Activated naive CD4-positive, alpha-beta T cell treated with anti-CD3 and anti-CD28 coated beads for 36 hours (primary cell): ENCODE measurements at regions of chr19 and their contacts with region 1.

Region 1: DNA sequence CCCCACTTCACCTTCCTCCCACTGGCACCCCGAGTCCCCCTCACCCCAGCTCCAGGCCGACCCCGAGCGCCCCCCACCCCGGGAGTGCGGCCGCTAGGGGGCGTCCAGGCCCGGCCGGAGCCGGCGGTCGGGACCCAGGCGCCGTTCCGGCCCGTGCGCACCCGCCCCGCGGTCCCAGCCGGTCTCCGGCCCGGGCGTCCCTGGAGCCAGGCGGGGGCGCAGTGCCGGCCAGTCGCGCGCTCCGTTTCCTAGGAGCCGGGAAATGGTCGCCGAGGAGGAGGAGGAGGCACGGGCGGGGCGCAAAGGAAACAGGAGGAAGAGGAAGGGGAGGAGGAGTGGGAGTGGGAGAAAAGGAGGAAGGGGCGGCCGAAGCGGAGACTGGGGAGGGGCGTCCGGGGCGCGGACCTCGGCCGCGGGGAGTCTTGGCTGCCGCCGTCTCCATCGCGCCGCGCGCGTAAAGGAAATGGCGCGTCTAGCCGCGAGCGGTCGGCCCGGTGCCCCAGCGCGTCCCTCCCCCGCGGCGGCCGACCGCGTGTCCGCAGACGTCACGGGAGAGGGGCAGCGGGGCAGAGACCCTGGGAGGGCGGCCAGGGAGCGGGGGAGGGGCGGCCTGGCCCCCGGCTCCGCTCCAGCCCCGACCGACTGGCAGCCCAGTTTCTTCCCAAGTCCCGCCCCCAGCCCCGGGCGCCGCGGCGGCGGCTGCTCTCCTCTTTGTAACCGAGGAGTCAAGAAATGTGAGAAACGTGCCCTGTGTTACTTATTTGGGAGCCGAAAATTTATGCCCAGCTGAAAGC is 1.1 kb upstream of the KCTD15 start:
- DNase-seq: peak; percentile 53
- H3K4me3 Mint-ChIP-seq: peak overlapping the region; percentile 72
- H3K27ac Mint-ChIP-seq: no peak overlapping the region
- H3K4me1 Mint-ChIP-seq: no peaks in the 10 kb centered on the region
- H3K27me3 Mint-ChIP-seq: peaks cover 40% of the 10 kb centered on the region

Region 2: DNA sequence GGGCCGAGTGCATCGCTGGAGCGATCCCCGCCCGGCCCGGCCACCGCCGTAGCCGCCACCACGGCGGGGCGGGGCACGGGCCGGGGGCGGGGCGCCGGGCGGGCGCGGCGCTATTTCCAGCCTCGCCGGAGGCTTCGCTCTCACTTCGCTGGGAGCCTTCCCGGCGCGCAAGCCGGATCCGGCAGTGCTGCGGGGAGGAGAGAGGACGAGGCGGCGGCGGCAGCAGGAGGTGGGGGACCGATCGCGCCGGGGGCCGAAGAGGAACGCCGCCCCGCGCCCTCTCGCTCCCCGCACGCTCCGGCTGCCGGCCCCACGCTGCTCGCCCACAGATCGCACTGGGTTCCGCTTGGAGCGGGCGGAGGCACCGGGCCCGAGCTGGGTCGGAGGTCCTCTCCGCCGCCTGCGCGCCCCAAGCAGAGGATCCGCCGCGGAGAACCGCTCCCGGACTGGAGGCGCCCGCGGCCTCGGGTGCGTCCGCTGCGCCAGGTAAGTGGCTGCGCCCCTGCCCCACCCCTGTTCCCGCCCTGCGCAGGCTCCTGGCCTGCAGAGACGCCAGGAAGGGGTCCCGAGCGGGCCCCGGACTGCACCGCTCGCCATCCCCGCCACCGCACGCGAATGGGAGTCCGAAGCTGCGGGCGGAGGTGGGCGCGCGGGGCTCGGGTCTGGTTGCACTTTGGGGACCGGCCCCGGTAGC is 173.6 kb before region 1 on chr19 and contains the start of gene CHST8:
- CTCF ChIA-PET with region 1: no interaction called
- intact Hi-C with region 1: no loop called
- DNase-seq: no peak
- H3K4me3 Mint-ChIP-seq: no peak within 1 kb of the TSS
- H3K27ac Mint-ChIP-seq: no peak within 1 kb of the TSS
- H3K4me1 Mint-ChIP-seq: no peaks in the 10 kb centered on the region
- H3K27me3 Mint-ChIP-seq: peaks cover 37% of the 10 kb centered on the region
- total RNA-seq, gene CHST8: not detected

Region 3: GRCh38 chr19:33819880-33820781 is 24.6 kb after region 1 on chr19:
- CTCF ChIA-PET with region 1: no interaction called
- intact Hi-C with region 1: loop called (anchors 1 kb)
- DNase-seq: peak; percentile 80
- H3K4me3 Mint-ChIP-seq: peak overlapping the region; percentile 77
- H3K27ac Mint-ChIP-seq: no peak overlapping the region
- H3K4me1 Mint-ChIP-seq: peaks cover 18% of the 10 kb centered on the region
- H3K27me3 Mint-ChIP-seq: peaks cover 16% of the 10 kb centered on the region

Region 4: DNA sequence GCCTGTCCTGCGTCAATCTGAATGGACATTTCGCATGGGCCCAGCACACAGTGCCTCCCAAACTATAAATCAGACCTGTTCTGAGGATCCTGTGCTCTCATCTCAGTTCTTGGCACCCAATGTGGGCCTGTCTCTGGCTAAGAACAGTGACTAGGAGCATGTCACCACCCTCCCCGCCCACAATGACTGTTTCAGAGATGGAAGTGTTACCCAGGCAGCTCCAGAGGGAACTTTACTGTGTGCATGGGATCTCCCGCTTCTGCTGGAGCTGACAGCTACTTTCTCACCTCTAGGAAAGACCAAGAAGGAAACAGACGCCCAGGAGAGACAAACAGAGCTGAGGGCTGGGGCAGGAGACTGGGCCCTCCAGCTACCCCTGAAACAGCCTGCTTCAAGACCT is 46.1 kb after region 1 on chr19:
- CTCF ChIA-PET with region 1: no interaction called
- intact Hi-C with region 1: no loop called
- DNase-seq: no peak
- H3K4me3 Mint-ChIP-seq: no peak overlapping the region
- H3K27ac Mint-ChIP-seq: no peak overlapping the region
- H3K4me1 Mint-ChIP-seq: no peaks in the 10 kb centered on the region
- H3K27me3 Mint-ChIP-seq: peaks cover 25% of the 10 kb centered on the region

Region 5: GRCh38 chr19:33998739-33999345 is 203.3 kb after region 1 on chr19:
- CTCF ChIA-PET with region 1: interaction called, 3 read pairs
- intact Hi-C with region 1: loop called (anchors 5 kb)
- DNase-seq: no peak
- H3K4me3 Mint-ChIP-seq: no peak overlapping the region
- H3K27ac Mint-ChIP-seq: no peak overlapping the region
- H3K4me1 Mint-ChIP-seq: no peaks in the 10 kb centered on the region
- H3K27me3 Mint-ChIP-seq: peaks cover 19% of the 10 kb centered on the region

Region 6: DNA sequence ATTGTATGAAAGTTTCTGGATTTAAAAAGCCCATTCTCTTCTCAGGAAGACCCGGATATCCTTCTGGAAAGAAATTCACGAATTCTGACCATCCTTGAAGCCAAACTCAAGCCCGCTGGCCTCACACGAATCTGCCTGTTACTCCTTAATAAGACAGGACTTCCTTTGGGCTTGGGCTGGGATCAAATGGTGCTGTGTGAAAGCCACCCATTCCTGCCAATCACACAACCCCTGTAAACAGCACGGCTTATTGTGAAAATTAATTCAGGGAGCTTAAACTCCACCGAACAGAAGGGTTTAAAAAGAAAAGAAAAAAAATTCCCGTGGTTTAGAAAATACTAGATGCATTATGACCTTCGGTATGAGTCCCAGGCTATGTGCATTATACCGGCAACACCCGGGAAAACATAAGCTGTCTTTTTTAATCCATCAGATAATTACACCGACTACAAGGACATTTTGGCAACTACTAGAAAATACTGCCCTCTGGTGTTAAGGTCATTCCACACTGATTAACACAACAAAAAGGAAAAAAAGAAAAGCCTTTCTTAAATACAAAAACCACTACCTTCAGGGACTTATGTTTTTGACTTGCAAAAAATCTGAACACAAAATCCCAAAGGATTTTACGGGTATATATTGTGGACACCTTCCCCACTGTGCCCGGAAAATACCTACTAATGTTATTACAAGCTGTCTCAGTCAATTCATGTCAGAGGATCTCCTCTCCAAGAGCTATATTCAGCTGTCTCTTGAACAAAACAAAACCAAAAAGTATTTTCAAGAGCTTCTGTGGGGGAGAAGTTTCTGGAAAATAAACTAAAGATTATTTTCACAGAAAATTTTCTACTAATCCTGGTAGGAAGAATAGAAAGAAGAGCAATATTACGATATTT is 300.7 kb after region 1 on chr19:
- CTCF ChIA-PET with region 1: interaction called, 6 read pairs
- intact Hi-C with region 1: loop called (anchors 1 kb)
- DNase-seq: no peak
- H3K4me3 Mint-ChIP-seq: no peak overlapping the region
- H3K27ac Mint-ChIP-seq: no peak overlapping the region
- H3K4me1 Mint-ChIP-seq: peaks cover 2% of the 10 kb centered on the region
- H3K27me3 Mint-ChIP-seq: peaks cover 4% of the 10 kb centered on the region

Region 7: DNA sequence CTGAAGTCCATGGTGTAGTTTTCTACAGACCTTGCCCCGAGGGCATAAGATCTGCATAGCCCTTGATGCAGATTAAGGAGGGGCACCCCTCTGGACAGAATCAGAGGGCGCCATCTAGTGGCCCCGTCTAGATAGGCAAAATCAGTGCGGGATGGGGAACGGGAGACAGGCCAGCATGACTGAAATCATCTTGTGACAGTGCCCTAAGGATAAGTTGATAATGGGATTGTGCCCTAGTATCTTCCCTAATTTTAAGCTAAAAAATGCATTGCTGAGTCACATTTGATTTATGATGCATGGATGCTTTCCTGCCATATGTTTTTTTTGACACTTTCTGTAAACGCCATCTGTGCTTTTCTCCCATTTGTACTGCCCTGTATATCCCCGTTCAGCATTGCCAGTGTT is 550.4 kb after region 1 on chr19:
- CTCF ChIA-PET with region 1: no interaction called
- intact Hi-C with region 1: loop called (anchors 5 kb)
- DNase-seq: peak; percentile 82
- H3K4me3 Mint-ChIP-seq: no peak overlapping the region
- H3K27ac Mint-ChIP-seq: no peak overlapping the region
- H3K4me1 Mint-ChIP-seq: peaks cover 17% of the 10 kb centered on the region
- H3K27me3 Mint-ChIP-seq: no peaks in the 10 kb centered on the region